PC-9 (cell line): ENCODE measurements at regions of chrX and their contacts with region 1.

Region 1: DNA sequence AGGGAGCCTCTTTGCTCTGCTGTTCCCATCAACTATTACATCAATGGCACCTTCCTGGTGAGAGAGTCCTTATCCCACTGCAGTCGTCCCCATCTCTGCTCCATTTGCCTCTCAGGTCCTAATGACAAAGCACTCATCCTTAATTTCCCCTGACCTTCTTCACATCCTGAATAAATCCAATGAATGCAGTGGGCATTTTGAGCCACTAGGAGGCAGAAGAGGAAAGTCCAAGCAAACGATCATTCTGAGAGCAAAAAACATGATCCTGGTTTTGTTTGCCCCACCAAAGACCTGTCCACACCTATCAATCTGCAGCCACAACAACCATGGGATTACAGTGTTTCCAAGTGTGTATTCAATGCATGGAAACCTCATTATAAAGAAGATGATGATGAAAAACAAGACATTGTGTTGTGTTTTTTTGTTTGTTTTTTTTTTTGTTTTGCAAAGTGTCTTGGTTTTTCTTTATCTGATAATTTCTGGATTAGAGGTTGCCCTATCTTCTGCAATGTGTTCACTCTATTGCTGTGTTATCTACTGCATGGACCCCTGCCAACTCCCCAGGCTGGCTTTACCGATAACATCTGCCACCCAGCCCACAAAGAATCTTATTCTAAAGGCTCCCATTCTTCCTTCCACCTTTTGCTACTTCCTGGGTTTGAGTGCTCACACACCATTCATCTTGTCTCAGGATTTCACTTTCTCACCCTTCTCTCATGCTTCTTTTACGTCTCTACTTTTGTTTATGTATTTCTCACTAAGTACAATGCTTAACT is 207.2 kb downstream of the NLGN4X start:
- DNase-seq: peak in 1 of 2 experiments; percentile 35
- H3K4me3 ChIP-seq: no peak overlapping the region
- H3K27ac ChIP-seq: no peak overlapping the region
- H3K4me1 ChIP-seq: 0 out of 2 replicates have a peak, but pooled peaks cover 10% of the 10 kb centered on the region
- H3K27me3 ChIP-seq: no peaks in the 10 kb centered on the region
- CTCF ChIP-seq: peak; percentile 83

Region 2: GRCh38 chrX:5866264-5866663 is 155.2 kb before region 1 on chrX:
- CTCF ChIA-PET with region 1: no interaction called
- POLR2A ChIA-PET with region 1: no interaction called
- intact Hi-C with region 1: no loop called
- DNase-seq: no peak
- H3K4me3 ChIP-seq: no peak overlapping the region
- H3K27ac ChIP-seq: no peak overlapping the region
- H3K4me1 ChIP-seq: no peaks in the 10 kb centered on the region
- H3K27me3 ChIP-seq: 0 out of 2 replicates have a peak, but pooled peaks cover 2% of the 10 kb centered on the region
- CTCF ChIP-seq: no peak

Region 3: DNA sequence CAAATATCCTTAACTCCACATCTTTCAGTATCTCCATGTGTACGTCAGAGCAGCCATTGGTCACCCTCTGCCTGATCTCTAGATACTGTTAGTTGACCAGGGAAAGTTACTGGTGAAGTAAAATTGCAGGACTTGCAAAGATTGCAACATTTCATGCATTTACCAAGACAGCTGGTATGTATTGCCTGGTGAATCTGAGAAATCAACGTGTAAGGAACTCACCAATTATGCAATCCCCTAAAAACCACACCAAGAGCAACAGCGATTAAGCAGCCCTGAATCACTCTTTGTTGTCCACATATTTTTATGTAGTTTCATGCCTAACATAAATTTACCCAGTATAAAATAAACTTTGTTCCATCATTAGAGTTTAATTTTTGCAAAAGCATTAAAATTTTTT is 64.0 kb before region 1 on chrX:
- CTCF ChIA-PET with region 1: no interaction called
- POLR2A ChIA-PET with region 1: no interaction called
- intact Hi-C with region 1: no loop called
- DNase-seq: no peak
- H3K4me3 ChIP-seq: no peak overlapping the region
- H3K27ac ChIP-seq: no peak overlapping the region
- H3K4me1 ChIP-seq: no peaks in the 10 kb centered on the region
- H3K27me3 ChIP-seq: no peaks in the 10 kb centered on the region
- CTCF ChIP-seq: no peak

Region 4: GRCh38 chrX:6052111-6052745 is 30.7 kb after region 1 on chrX:
- CTCF ChIA-PET with region 1: no interaction called
- POLR2A ChIA-PET with region 1: no interaction called
- intact Hi-C with region 1: loop called (anchors 1 kb)
- DNase-seq: peak; percentile 39 to 61
- H3K4me3 ChIP-seq: no peak overlapping the region
- H3K27ac ChIP-seq: no peak overlapping the region
- H3K4me1 ChIP-seq: peaks cover 12% of the 10 kb centered on the region
- H3K27me3 ChIP-seq: no peaks in the 10 kb centered on the region
- CTCF ChIP-seq: no peak

Region 5: GRCh38 chrX:6225911-6226595 is 204.5 kb after region 1 on chrX:
- CTCF ChIA-PET with region 1: no interaction called
- POLR2A ChIA-PET with region 1: no interaction called
- intact Hi-C with region 1: loop called (anchors 1 kb)
- DNase-seq: no peak
- H3K4me3 ChIP-seq: no peak overlapping the region
- H3K27ac ChIP-seq: no peak overlapping the region
- H3K4me1 ChIP-seq: no peaks in the 10 kb centered on the region
- H3K27me3 ChIP-seq: no peaks in the 10 kb centered on the region
- CTCF ChIP-seq: 0 out of 2 replicates have a peak, but pooled peaks have one; percentile 38

Region 6: DNA sequence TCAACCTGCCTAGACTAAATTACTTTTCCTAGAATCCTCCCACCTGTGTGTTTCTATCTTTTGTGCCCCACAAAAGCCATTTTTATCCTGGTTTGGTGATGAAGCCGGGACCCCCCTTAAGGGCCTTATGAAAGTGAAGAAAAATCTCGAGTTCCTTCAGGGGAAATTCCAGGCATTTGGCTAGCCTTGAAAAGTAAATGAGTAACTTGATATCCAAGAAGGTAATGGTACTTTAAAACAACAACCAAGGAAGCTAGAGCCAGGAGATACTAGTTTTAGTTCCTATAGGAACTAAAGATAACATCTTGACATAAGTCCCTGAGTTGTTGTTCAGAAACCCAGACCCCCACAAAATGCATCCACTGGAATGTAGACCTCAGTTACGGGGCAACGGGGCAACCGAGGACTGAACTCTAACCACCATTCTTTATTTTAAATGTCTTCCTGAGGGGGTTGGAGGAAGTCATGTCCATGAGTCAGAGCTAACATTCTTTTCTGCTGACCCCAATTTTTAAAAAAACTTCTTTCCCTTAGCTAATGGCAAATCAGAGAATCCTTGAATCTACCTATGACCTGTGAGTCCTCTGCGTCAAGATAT is 439.5 kb after region 1 on chrX:
- CTCF ChIA-PET with region 1: no interaction called
- POLR2A ChIA-PET with region 1: no interaction called
- intact Hi-C with region 1: loop called (anchors 5 kb)
- DNase-seq: peak; percentile 10 to 78
- H3K4me3 ChIP-seq: no peak overlapping the region
- H3K27ac ChIP-seq: peak overlapping the region; percentile 85
- H3K4me1 ChIP-seq: peaks cover 33% of the 10 kb centered on the region
- H3K27me3 ChIP-seq: no peaks in the 10 kb centered on the region
- CTCF ChIP-seq: no peak

Region 7: GRCh38 chrX:7925867-7926472 is 1904.5 kb after region 1 on chrX:
- CTCF ChIA-PET with region 1: no interaction called
- POLR2A ChIA-PET with region 1: no interaction called
- intact Hi-C with region 1: loop called (anchors 5 kb)
- DNase-seq: peak; percentile 35 to 44
- H3K4me3 ChIP-seq: peak overlapping the region; percentile 57; the same call in 1 of the 2 replicates
- H3K27ac ChIP-seq: no peak overlapping the region
- H3K4me1 ChIP-seq: no peaks in the 10 kb centered on the region
- H3K27me3 ChIP-seq: no peaks in the 10 kb centered on the region
- CTCF ChIP-seq: peak; percentile 58